ENCODE measurements at regions of chr17 and their contacts with region 1.

Region 1: DNA sequence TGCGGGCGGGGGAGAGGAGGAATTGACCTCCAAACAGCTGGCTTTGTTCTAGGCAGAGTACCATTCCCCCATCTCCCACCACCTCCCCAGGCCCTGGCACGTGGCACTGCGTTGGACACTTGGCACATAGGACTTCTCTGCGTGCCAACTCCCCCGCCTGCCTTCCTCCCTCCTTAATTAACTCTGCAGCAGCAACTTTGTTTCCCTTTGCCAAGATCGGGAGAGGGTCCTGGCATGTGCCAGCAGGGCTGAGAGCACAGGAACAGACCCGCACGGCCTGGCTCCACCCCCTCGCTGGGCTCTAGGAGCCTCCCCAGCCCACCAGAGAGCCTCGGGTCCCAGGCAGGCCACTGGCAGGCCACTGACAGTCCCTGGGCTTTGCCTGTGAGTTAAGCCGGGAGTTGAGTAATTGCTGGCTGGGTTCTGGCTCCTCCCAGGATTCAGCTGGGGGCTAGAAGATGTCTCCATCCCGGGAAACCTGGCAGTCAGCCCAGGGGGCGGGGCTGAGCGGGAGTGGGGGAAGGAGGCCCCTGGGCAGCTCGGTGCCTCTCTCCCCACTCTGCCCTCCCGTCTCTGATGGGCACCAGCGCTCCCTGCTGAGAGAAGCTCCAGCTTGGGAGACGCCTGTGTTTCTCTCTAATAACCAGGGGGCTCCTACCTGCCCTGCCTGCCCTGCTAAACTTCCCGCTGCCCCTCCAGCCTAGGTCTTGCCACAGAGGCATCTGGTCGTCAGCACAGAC is 224.0 kb upstream of the TNRC6C start:
- DNase-seq: no peak
- ATAC-seq: no peak
- H3K4me3 ChIP-seq: no peak overlapping the region
- H3K27ac ChIP-seq: no peak overlapping the region
- H3K4me1 ChIP-seq: no peaks in the 10 kb centered on the region
- H3K27me3 ChIP-seq: peaks cover 86% of the 10 kb centered on the region
- CTCF ChIP-seq: no peak

Region 2: DNA sequence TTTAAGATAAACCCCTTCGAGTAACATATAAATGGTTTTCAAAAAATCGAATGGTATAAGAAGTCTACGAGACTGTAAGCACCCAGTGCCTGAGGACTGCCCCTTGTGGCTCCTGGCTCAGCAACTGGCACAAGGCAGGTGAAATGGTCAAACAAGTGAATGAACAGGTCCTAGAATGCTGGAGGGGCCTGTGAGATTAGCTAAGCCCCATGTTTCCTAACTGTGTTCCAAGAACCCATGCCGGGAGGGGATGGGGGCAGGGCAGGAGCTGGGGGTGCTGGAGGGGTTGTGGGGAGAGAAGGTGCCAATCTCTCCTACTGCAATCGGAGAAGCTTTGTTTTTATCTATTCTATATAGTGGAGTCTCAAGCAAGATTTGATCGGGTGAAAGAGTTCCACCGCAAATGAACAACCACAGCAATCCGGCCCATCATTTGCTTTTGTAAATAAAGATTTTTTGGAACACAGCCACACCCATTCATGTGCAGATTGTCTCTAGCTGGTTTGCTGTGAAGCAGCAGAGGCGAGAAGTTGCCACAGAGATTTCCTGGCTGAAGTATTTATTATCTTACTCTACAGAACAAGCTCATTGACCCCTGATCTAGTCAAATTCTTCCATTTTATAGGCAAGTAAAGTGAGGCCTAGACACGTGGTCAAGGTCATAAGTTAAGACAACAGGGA is 28.4 kb after region 1 on chr17:
- CTCF ChIA-PET with region 1: no interaction called
- POLR2A ChIA-PET with region 1: no interaction called
- intact Hi-C with region 1: no loop called
- DNase-seq: no peak
- ATAC-seq: no peak
- H3K4me3 ChIP-seq: no peak overlapping the region
- H3K27ac ChIP-seq: no peak overlapping the region
- H3K4me1 ChIP-seq: no peaks in the 10 kb centered on the region
- H3K27me3 ChIP-seq: peaks cover 64% of the 10 kb centered on the region
- CTCF ChIP-seq: no peak

Region 3: GRCh38 chr17:78013683-78014467 is 279.4 kb after region 1 on chr17:
- CTCF ChIA-PET with region 1: no interaction called
- POLR2A ChIA-PET with region 1: no interaction called
- intact Hi-C with region 1: loop called (anchors 10 kb)
- DNase-seq: peak; percentile 85
- ATAC-seq: peak; percentile 83
- H3K4me3 ChIP-seq: no peak overlapping the region
- H3K27ac ChIP-seq: no peak overlapping the region
- H3K4me1 ChIP-seq: no peaks in the 10 kb centered on the region
- H3K27me3 ChIP-seq: 0 out of 2 replicates have a peak, but pooled peaks cover 3% of the 10 kb centered on the region
- CTCF ChIP-seq: peak; percentile 98

Measured in PC-3 (cell line).